SK-N-SH (cell line): ENCODE measurements at regions of chr1 and their contacts with region 1.

Region 1: GRCh38 chr1:13960375-13960987 is 260.5 kb downstream of the PRDM2 start:
- DNase-seq: peak; percentile 65
- H3K4me3 ChIP-seq: no peak overlapping the region; a peak in 1 of 4 replicates
- H3K27ac ChIP-seq: no peak overlapping the region
- H3K4me1 ChIP-seq: no peaks in the 10 kb centered on the region
- H3K27me3 ChIP-seq: no peaks in the 10 kb centered on the region
- CTCF ChIP-seq: peak; percentile 94
- EP300 ChIP-seq: no peak
- RAD21 ChIP-seq: peak; percentile 94

Region 2: GRCh38 chr1:13662493-13662892 is 298.0 kb before region 1 on chr1:
- CTCF ChIA-PET with region 1: interaction called, 31 read pairs
- POLR2A ChIA-PET with region 1: no interaction called
- DNase-seq: no peak
- H3K4me3 ChIP-seq: no peak overlapping the region
- H3K27ac ChIP-seq: no peak overlapping the region
- H3K4me1 ChIP-seq: no peaks in the 10 kb centered on the region; a peak in 2 of 4 replicates
- H3K27me3 ChIP-seq: no peaks in the 10 kb centered on the region
- CTCF ChIP-seq: no peak
- EP300 ChIP-seq: no peak
- RAD21 ChIP-seq: no peak